Natural killer cell (primary cell): ENCODE measurements at regions of chr11 and their contacts with region 1.

Region 1: GRCh38 chr11:108538022-108538424 is 39.8 kb upstream of the POGLUT3 start:
- DNase-seq: peak; percentile 49 to 61
- ATAC-seq: peak; percentile 87 to 96 (median 89)
- H3K4me3 ChIP-seq: no peak overlapping the region
- H3K4me3 Mint-ChIP-seq: peak overlapping the region; percentile 81
- H3K27ac ChIP-seq: peak overlapping the region; percentile 47
- H3K27ac Mint-ChIP-seq: peak overlapping the region; percentile 87 to 89
- H3K4me1 ChIP-seq: peaks cover 7% of the 10 kb centered on the region
- H3K4me1 Mint-ChIP-seq: peaks cover 14 to 22% of the 10 kb centered on the region in 2 donors
- H3K27me3 ChIP-seq: no peaks in the 10 kb centered on the region
- H3K27me3 Mint-ChIP-seq: peaks cover 0 to 3% of the 10 kb centered on the region in 2 donors
- CTCF ChIP-seq: no peak

Region 2: GRCh38 chr11:108497317-108498045 is 40.5 kb before region 1 on chr11:
- intact Hi-C with region 1: loop called (anchors 2 kb)
- DNase-seq: peak; percentile 62 to 87
- ATAC-seq: peak; percentile 68 to 85 (median 81)
- H3K4me3 ChIP-seq: peak overlapping the region; percentile 54
- H3K4me3 Mint-ChIP-seq: peak overlapping the region; percentile 89
- H3K27ac ChIP-seq: peak overlapping the region; percentile 85
- H3K27ac Mint-ChIP-seq: peak overlapping the region; percentile 85 to 99
- H3K4me1 ChIP-seq: peaks cover 18% of the 10 kb centered on the region
- H3K4me1 Mint-ChIP-seq: peaks cover 22 to 25% of the 10 kb centered on the region in 2 donors
- H3K27me3 ChIP-seq: no peaks in the 10 kb centered on the region
- H3K27me3 Mint-ChIP-seq: no peaks in the 10 kb centered on the region
- CTCF ChIP-seq: no peak

Region 3: GRCh38 chr11:108593214-108593922 is 55.3 kb after region 1 on chr11 and contains the start of gene EXPH5:
- intact Hi-C with region 1: loop called (anchors 1 kb)
- DNase-seq: peak; percentile 53 to 90
- ATAC-seq: peak; percentile 86 to 93 (median 89)
- H3K4me3 ChIP-seq: peak within 1 kb of the TSS; percentile 80
- H3K4me3 Mint-ChIP-seq: peak within 1 kb of the TSS; percentile 100
- H3K27ac ChIP-seq: peak within 1 kb of the TSS; percentile 25
- H3K27ac Mint-ChIP-seq: peak within 1 kb of the TSS; percentile 87 to 97
- H3K4me1 ChIP-seq: peaks cover 9% of the 10 kb centered on the region
- H3K4me1 Mint-ChIP-seq: peaks cover 18 to 19% of the 10 kb centered on the region in 2 donors
- H3K27me3 ChIP-seq: peaks cover 11% of the 10 kb centered on the region
- H3K27me3 Mint-ChIP-seq: peaks cover 26 to 38% of the 10 kb centered on the region in 2 donors
- CTCF ChIP-seq: no peak
- total RNA-seq, gene EXPH5: 1.5 to 5.4 (median 2.6) TPM